Psoas muscle (tissue), 8 donors: ENCODE measurements at regions of chr5 and their contacts with region 1.

Region 1: GRCh38 chr5:159915904-159916840 is at the start of gene ADRA1B:
- DNase-seq: peak; percentile 77 to 86
- ATAC-seq: peak; percentile 89 to 92 (median 92)
- H3K4me3 ChIP-seq: peak within 1 kb of the TSS; percentile 57
- H3K27ac ChIP-seq: no peak within 1 kb of the TSS
- H3K4me1 ChIP-seq: peaks cover 3% of the 10 kb centered on the region
- H3K27me3 ChIP-seq: peaks cover 0 to 44% (median 0%) of the 10 kb centered on the region in 3 donors
- CTCF ChIP-seq: peak; percentile 60
- total RNA-seq, gene ADRA1B: 0.18 to 0.50 (median 0.30) TPM in 3 of 4 donors, not detected in the other

Region 2: GRCh38 chr5:159286420-159287035 is 629.6 kb before region 1 on chr5:
- intact Hi-C with region 1: loop called in 1 of 2 experiments (anchors 5 kb)
- DNase-seq: no peak
- ATAC-seq: peak in 2 of 4 donors; percentile 50 to 59
- H3K4me3 ChIP-seq: no peak overlapping the region
- H3K27ac ChIP-seq: no peak overlapping the region
- H3K4me1 ChIP-seq: no peaks in the 10 kb centered on the region
- H3K27me3 ChIP-seq: no peaks in the 10 kb centered on the region
- CTCF ChIP-seq: peak; percentile 40

Region 3: DNA sequence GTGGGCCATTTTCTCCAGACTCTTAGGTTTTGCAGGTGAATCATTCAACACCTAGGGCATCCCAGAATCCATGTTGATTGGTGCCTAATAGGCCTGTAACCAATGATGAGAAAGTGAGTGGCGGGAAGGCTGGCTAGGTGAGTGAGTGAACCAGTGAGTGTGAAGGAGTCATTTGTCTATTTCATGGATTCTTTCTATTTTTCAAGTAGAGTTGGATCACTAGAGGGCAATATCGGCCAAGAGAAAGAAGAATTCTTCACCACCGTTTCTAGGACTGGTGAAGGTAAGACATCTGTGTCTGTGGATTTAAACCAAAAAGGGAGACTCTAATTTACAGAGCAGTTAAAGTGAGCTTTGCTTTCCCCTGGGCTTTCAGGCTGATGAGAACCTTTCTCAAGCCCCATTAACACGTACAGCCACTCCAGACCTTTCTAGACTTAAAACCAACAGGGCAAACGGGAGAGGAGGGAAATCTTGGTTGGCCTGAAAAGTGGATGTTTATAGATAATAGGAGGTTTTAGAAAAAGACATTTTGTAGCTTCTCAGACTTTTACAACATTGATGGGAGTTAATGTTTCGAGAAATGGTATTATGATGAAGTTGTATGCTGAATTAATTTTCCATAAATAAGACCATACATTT is 471.6 kb before region 1 on chr5:
- intact Hi-C with region 1: loop called (anchors 5 to 10 kb)
- DNase-seq: no peak
- ATAC-seq: no peak
- H3K4me3 ChIP-seq: no peak overlapping the region
- H3K27ac ChIP-seq: no peak overlapping the region
- H3K4me1 ChIP-seq: no peaks in the 10 kb centered on the region
- H3K27me3 ChIP-seq: no peaks in the 10 kb centered on the region
- CTCF ChIP-seq: no peak

Region 4: GRCh38 chr5:159510282-159510681 is 405.9 kb before region 1 on chr5:
- intact Hi-C with region 1: loop called (anchors 2 to 5 kb)
- DNase-seq: peak; percentile 64 to 73
- ATAC-seq: peak; percentile 80 to 92 (median 90)
- H3K4me3 ChIP-seq: no peak overlapping the region
- H3K27ac ChIP-seq: no peak overlapping the region
- H3K4me1 ChIP-seq: no peaks in the 10 kb centered on the region
- H3K27me3 ChIP-seq: no peaks in the 10 kb centered on the region
- CTCF ChIP-seq: no peak

Region 5: DNA sequence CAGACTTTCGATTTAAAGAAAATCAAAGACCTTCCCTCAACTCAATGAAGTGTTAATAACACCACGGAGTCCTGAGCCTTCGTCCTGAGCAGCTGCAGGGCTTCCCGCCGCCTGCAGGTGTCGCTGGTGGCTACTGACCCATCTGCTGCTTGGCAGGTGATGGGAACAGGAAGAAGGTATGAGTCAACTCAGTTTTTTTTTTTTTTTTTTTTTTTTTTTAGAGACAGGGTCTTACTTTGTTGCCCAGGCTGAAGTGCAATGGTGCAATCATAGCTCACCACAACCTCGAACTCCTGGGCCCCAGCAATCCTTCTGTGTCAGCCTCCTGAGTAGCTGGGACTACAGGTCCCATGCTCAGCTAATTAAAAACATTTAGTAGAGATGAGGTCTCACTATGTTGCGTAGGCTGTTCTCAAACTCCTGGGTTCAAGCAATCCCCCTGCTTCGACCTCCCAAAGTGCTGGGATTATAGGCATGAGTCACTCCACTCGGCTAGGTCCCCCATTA is 400.2 kb before region 1 on chr5:
- intact Hi-C with region 1: loop called (anchors 2 to 5 kb)
- DNase-seq: peak; percentile 68
- ATAC-seq: peak; percentile 74 to 90 (median 87)
- H3K4me3 ChIP-seq: no peak overlapping the region
- H3K27ac ChIP-seq: no peak overlapping the region
- H3K4me1 ChIP-seq: no peaks in the 10 kb centered on the region
- H3K27me3 ChIP-seq: no peaks in the 10 kb centered on the region
- CTCF ChIP-seq: peak; percentile 71

Region 6: DNA sequence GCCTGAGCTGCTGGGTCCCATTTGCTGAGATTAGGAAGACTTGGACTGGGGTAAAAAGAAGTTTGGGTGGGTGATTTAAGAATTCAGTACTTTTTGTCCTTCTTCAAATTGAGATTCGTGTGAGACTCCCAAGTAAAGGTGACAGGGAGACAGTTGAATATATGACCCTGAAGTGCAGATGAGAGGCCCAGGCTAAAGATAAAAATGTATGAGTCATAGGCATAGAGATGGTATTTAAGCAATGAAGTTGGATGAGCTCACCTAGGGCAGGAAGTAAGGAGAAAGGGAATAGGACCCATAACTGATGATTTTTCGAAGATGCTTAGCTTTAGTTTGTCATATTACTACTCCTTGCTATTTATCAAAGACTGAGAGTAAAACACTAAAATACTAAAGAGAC is 255.8 kb before region 1 on chr5:
- intact Hi-C with region 1: loop called in 1 of 2 experiments (anchors 10 kb)
- DNase-seq: no peak
- ATAC-seq: no peak
- H3K4me3 ChIP-seq: no peak overlapping the region
- H3K27ac ChIP-seq: no peak overlapping the region
- H3K4me1 ChIP-seq: no peaks in the 10 kb centered on the region
- H3K27me3 ChIP-seq: no peaks in the 10 kb centered on the region
- CTCF ChIP-seq: no peak

Region 7: DNA sequence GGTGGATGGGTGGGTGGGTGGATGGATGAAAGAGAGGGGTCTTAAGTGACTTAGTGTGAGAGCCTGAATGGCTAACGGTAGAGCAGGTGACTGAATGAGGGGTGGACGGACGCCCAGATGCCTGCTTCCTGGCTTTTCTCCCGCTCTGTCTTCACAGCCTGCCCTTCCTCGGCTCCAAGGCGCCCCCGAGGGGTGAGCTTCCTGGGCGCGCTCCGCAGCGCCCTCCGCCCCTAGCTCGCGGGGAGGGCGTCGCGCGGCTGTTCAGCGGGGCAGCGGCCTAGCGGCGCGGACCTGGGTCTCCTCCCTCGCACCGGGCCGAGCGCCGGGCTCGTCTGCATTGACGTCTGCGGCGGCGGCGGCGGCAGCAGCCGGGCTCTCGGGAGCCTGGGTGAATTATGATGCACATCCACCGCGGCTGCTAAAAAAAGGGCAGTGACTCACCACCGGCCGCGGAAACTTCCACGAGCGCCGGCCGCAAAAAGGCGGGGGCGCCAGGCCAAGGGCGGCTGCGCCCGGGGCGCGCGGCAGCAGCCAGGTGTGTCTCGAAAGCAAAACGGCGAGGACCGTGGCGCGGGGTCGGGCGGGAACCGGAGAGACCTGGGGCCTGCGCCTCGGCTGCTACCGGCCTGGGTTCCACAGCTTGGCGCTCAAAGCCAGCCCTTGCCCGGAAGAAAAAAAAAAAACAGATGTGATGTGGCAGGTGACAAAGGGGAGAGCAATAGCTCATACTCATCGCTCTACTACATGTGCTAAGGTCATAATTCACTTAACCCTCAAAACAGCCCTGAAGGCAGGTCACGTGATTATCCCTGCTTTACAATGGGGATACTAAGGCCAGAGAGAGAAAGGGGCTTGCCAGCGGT is 142.9 kb before region 1 on chr5:
- intact Hi-C with region 1: loop called in 1 of 2 experiments (anchors 10 kb)
- DNase-seq: peak; percentile 86 to 89
- ATAC-seq: peak; percentile 98 to 99 (median 98)
- H3K4me3 ChIP-seq: peak overlapping the region; percentile 58
- H3K27ac ChIP-seq: peak overlapping the region; percentile 82
- H3K4me1 ChIP-seq: peaks cover 5% of the 10 kb centered on the region
- H3K27me3 ChIP-seq: no peaks in the 10 kb centered on the region
- CTCF ChIP-seq: no peak

Region 8: GRCh38 chr5:160905285-160905684 is 989.1 kb after region 1 on chr5:
- intact Hi-C with region 1: no loop called
- DNase-seq: no peak
- ATAC-seq: no peak
- H3K4me3 ChIP-seq: no peak overlapping the region
- H3K27ac ChIP-seq: no peak overlapping the region
- H3K4me1 ChIP-seq: no peaks in the 10 kb centered on the region
- H3K27me3 ChIP-seq: no peaks in the 10 kb centered on the region
- CTCF ChIP-seq: no peak